ENCODE measurements at regions of chr5 and their contacts with region 1.

Region 1: DNA sequence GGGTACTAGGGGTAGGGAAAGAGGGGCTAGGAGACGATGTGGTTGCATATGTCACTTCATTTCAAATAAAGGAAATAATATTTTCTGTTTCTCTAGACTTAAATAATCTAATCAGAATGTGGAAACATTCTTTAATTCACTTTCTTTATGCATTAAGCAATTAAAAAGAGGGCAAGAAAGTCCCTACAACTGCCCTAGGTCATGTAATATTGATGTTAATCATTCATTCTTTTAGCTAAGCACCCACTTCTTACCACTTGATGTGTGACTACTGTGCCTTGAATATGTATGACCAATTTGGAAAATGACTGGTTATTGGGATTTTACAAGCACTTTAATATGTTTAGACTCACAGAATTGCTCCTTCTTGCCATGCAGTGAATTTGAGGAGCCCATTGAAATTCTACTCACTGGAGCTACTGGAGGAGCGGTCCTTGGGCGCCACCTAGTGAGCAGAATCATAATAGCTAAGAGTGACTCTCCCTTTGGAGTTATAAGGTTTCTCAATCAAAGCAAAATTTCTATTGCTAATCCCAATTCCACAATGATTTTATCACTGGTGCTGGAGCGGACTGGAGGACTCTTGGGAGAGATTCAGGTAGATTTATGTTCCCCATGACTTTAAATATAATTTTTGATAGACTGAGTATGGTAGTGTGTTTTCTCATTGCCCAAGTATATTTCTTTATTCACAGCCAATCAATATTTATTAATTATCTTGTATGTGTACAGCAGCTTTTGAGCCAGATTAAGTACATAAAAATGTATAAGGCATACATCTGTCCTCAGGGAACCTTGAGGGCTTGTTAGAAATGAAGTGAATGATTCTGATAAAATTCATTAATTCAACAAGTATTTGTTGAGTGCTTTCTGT is 225.1 kb downstream of the ADGRV1 start:
- DNase-seq: peak; percentile 23
- CTCF ChIP-seq: peak; percentile 71

Region 2: GRCh38 chr5:90446961-90447360 is 336.7 kb before region 1 on chr5:
- in situ Hi-C with region 1: loop called (anchors 10 kb)
- DNase-seq: no peak
- CTCF ChIP-seq: no peak

Measured in GM13976 (cell line).